OCI-LY7 (cell line): ENCODE measurements at regions of chr14 and their contacts with region 1.

Region 1: GRCh38 chr14:60622917-60623257 is 26.4 kb downstream of the SIX1 start:
- DNase-seq: no peak
- H3K4me3 ChIP-seq: no peak overlapping the region
- H3K27ac ChIP-seq: no peak overlapping the region
- H3K4me1 ChIP-seq: peaks cover 4% of the 10 kb centered on the region
- CTCF ChIP-seq: no peak

Region 2: GRCh38 chr14:60266021-60266937 is 356.6 kb before region 1 on chr14:
- CTCF ChIA-PET with region 1: no interaction called
- POLR2A ChIA-PET with region 1: no interaction called
- intact Hi-C with region 1: no loop called
- DNase-seq: peak; percentile 48
- H3K4me3 ChIP-seq: no peak overlapping the region
- H3K27ac ChIP-seq: no peak overlapping the region
- H3K4me1 ChIP-seq: no peaks in the 10 kb centered on the region
- CTCF ChIP-seq: peak; percentile 92

Region 3: GRCh38 chr14:61025251-61026223 is 402.6 kb after region 1 on chr14:
- CTCF ChIA-PET with region 1: no interaction called
- POLR2A ChIA-PET with region 1: interaction called, 3 read pairs
- intact Hi-C with region 1: loop called (anchors 1 kb)
- DNase-seq: peak; percentile 81
- H3K4me3 ChIP-seq: no peak overlapping the region
- H3K27ac ChIP-seq: no peak overlapping the region
- H3K4me1 ChIP-seq: peaks cover 20% of the 10 kb centered on the region
- CTCF ChIP-seq: peak; percentile 99

Region 4: DNA sequence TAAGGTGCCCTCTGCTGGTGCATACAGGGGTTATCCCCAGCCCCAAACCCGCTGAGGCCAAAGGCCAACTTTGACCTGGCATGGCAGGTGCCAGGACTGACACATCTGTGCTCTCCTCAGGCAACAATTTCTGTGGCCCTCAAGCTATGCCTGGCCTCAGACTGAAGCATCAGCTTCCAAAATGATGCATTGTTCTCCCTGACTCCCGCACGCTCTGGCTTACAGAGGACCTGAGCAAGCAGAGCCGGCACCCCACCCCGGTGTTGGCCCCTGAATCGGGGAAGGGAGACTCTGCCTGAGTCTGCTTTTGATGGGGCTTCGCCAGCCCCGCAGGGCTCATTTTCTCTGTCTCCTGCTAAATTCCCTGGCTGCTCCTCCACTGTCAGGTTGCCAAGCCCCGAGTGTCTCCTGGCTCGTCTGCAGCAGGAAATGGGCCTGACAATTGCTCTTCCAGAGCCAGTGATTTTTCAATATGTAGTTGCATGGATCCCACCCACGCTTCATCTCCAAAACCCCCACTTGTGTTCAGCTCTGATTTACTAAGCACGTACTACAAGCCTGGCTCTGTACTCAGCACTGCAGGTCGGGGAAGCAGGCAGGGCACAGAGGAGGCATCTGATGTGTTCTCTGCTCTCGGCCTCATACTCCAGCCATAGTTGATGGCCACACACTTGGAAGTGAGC is 484.2 kb after region 1 on chr14:
- CTCF ChIA-PET with region 1: no interaction called
- POLR2A ChIA-PET with region 1: no interaction called
- intact Hi-C with region 1: loop called (anchors 1 kb)
- DNase-seq: peak; percentile 52
- H3K4me3 ChIP-seq: no peak overlapping the region
- H3K27ac ChIP-seq: no peak overlapping the region
- H3K4me1 ChIP-seq: peaks cover 22% of the 10 kb centered on the region
- CTCF ChIP-seq: peak; percentile 74; the same call in 1 of the 2 replicates